ENCODE measurements at regions of chr5 and their contacts with region 1.

Region 1: DNA sequence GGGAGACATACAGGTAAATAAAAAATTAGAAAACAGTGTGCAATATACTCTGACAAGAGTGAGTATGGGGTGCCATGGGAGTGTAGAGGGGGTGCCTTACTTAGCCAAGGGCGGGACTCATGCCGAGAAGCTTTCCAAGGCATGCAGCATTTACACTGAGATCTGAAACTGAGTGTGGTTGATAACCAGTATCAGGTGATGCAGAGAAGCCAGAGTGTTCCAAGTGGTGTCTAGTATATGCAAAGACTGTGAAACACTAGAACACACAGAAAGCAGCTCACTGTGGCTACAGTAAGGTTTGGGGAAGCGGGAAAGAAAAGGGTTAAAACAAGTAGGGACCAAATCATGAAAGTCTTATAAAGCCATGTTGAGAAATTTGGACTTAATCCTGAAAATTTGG is 30.5 kb upstream of the ERBIN start:
- DNase-seq: no peak
- H3K4me3 ChIP-seq: no peak overlapping the region
- CTCF ChIP-seq: no peak

Region 2: DNA sequence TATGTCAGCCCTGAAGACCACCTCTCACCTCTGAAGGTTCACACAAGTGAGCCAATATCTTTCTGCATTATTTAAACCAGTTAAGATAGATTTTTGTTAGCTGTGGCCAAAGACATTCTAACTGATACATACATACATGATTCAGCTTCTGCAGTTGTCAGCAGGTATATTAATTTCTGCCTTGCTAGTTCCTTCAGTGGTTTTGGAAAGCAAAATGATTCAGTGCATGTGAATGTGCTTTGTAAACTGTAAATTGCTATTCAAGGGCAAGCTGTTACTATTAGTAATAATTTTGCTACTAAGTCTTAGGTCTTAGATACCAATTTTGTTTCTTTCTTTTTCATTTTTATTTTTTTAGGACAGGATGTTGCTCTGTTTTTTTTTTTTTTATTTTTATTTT is 58.8 kb before region 1 on chr5:
- CTCF ChIA-PET with region 1: no interaction called
- POLR2A ChIA-PET with region 1: no interaction called
- DNase-seq: peak; percentile 61
- H3K4me3 ChIP-seq: no peak overlapping the region
- CTCF ChIP-seq: no peak

Region 3: GRCh38 chr5:65854925-65855324 is 41.0 kb before region 1 on chr5:
- CTCF ChIA-PET with region 1: no interaction called
- POLR2A ChIA-PET with region 1: no interaction called
- DNase-seq: no peak
- H3K4me3 ChIP-seq: no peak overlapping the region
- CTCF ChIP-seq: no peak

Region 4: DNA sequence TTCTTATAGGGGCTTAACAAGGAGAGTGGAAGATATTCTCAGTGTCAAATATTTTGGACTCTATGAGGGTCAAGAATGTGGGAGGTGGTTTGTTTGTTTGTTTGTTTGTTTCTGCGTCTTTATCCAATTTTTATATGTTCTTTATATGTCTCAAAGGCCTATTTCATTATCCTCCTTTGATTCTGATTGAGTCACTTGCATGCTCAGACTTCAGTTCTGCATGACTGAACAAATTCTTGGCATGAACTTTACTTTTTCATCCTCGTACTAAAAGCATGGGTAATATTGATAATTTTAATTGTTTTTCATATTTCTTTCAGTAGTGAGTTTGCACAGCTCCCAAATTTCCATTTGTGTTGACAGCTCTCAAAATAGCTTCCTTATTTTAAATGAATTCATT is 11.2 kb after region 1 on chr5:
- CTCF ChIA-PET with region 1: interaction called, 11 read pairs
- POLR2A ChIA-PET with region 1: interaction called, 3 read pairs
- DNase-seq: no peak
- H3K4me3 ChIP-seq: no peak overlapping the region
- CTCF ChIP-seq: no peak

Measured in AG04449 (cell line).